ENCODE measurements at regions of chr5 and their contacts with region 1.

Region 1: GRCh38 chr5:134904630-134905245 is at the start of gene PCBD2:
- DNase-seq: peak; percentile 96
- H3K4me3 ChIP-seq: peak within 1 kb of the TSS; percentile 75
- H3K27ac ChIP-seq: peak within 1 kb of the TSS; percentile 96
- H3K4me1 ChIP-seq: peaks cover 7% of the 10 kb centered on the region
- H3K27me3 ChIP-seq: no peaks in the 10 kb centered on the region
- CTCF ChIP-seq: peak; percentile 90
- total RNA-seq, gene PCBD2: 13.8 and 14.6 TPM in 2 replicates

Region 2: GRCh38 chr5:133952729-133953567 is 951.8 kb before region 1 on chr5:
- CTCF ChIA-PET with region 1: no interaction called
- POLR2A ChIA-PET with region 1: no interaction called
- intact Hi-C with region 1: no loop called
- DNase-seq: no peak
- H3K4me3 ChIP-seq: no peak overlapping the region
- H3K27ac ChIP-seq: no peak overlapping the region
- H3K4me1 ChIP-seq: no peaks in the 10 kb centered on the region
- H3K27me3 ChIP-seq: no peaks in the 10 kb centered on the region
- CTCF ChIP-seq: no peak

Region 3: DNA sequence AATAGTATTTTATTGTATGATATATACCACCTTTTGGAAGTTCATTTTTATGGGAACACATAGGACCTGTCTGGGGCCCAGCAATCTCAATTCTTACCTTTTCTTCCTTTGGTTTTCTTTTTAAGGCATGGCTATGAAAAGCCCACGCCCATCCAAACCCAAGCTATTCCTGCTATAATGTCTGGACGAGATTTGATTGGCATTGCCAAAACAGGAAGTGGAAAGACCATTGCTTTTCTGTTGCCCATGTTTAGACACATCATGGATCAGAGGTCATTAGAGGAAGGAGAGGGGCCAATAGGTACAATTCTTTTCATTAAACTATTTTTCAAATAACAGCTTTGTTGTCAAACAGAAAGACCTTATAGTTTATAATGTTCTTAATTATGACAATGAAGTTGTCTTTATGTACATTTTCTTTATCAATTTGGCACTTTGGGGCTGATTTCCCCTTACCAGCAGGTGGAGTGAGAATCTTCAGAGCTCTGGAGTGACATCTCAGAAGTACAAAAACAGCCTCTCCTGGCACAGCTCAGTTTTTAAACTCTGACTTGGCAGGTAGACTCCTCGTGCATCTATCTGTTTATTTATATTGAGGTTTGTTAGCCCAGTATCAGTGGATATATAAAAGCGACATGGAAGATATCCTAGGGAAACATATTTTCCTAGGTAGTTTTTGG is 120.4 kb before region 1 on chr5:
- CTCF ChIA-PET with region 1: no interaction called
- POLR2A ChIA-PET with region 1: no interaction called
- intact Hi-C with region 1: loop called (anchors 2 kb)
- DNase-seq: peak; percentile 27
- H3K4me3 ChIP-seq: no peak overlapping the region
- H3K27ac ChIP-seq: no peak overlapping the region
- H3K4me1 ChIP-seq: no peaks in the 10 kb centered on the region
- H3K27me3 ChIP-seq: no peaks in the 10 kb centered on the region
- CTCF ChIP-seq: peak; percentile 41; the same call in 1 of the 2 replicates

Region 4: DNA sequence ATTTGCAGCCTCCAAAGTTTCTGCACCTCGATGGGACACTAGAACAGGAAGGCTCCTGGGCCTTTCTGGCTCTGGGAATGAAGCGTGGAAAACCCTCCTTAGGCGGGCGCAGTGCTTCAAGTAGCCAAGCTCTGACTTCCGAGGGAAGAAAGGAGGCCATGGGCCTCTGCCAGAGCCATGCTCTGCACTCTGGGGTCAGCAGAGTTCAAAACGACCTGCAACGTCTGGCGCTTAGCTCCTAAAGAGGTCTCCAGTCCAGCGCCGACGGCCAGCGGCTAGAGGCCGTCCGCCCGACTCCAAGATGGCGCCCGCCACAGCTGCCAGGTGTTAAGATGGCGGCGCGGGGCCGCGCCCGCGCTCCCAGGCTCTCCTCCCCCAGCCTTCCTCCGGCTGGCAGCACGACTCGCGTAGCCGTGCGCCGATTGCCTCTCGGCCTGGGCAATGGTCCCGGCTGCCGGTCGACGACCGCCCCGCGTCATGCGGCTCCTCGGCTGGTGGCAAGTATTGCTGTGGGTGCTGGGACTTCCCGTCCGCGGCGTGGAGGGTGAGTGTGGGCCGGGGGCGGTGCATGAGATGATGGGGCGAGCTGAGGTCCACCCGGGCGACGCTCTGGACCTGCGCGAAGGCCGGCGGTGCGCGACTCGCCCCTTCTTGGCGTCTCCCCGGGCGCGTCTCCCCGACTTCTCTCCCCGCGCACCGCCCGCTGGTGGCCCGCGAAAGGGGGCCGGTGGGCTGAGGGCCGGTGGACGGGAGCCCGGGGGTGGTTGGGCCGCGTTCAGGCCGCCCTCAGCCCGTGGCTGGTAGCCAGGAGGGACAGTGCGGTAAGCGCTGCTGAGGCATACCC is 30.5 kb before region 1 on chr5 and contains the start of gene TXNDC15:
- CTCF ChIA-PET with region 1: interaction called, 4 read pairs
- POLR2A ChIA-PET with region 1: no interaction called
- intact Hi-C with region 1: loop called (anchors 2 kb)
- DNase-seq: peak; percentile 90
- H3K4me3 ChIP-seq: peak within 1 kb of the TSS; percentile 71
- H3K27ac ChIP-seq: peak within 1 kb of the TSS; percentile 97
- H3K4me1 ChIP-seq: peaks cover 10% of the 10 kb centered on the region
- H3K27me3 ChIP-seq: no peaks in the 10 kb centered on the region
- CTCF ChIP-seq: no peak
- total RNA-seq, gene TXNDC15: 40.7 and 42.0 TPM in 2 replicates

Region 5: GRCh38 chr5:134891473-134891872 is 13.3 kb before region 1 on chr5:
- CTCF ChIA-PET with region 1: no interaction called
- POLR2A ChIA-PET with region 1: no interaction called
- intact Hi-C with region 1: no loop called
- DNase-seq: no peak
- H3K4me3 ChIP-seq: no peak overlapping the region
- H3K27ac ChIP-seq: no peak overlapping the region
- H3K4me1 ChIP-seq: no peaks in the 10 kb centered on the region
- H3K27me3 ChIP-seq: no peaks in the 10 kb centered on the region
- CTCF ChIP-seq: no peak

Region 6: GRCh38 chr5:135013947-135014570 is 109.3 kb after region 1 on chr5:
- CTCF ChIA-PET with region 1: no interaction called
- POLR2A ChIA-PET with region 1: no interaction called
- intact Hi-C with region 1: no loop called
- DNase-seq: no peak
- H3K4me3 ChIP-seq: no peak overlapping the region
- H3K27ac ChIP-seq: no peak overlapping the region
- H3K4me1 ChIP-seq: no peaks in the 10 kb centered on the region
- H3K27me3 ChIP-seq: no peaks in the 10 kb centered on the region
- CTCF ChIP-seq: no peak